ENCODE measurements at regions of chr1 and their contacts with region 1.

Region 1: GRCh38 chr1:184982002-184982954 is 8.0 kb upstream of the NIBAN1 start:
- DNase-seq: peak; percentile 76
- H3K4me3 ChIP-seq: no peak overlapping the region
- H3K27ac ChIP-seq: no peak overlapping the region
- H3K4me1 ChIP-seq: no peaks in the 10 kb centered on the region
- H3K27me3 ChIP-seq: no peaks in the 10 kb centered on the region
- CTCF ChIP-seq: peak; percentile 65 to 84 (median 73)
- POLR2A ChIP-seq: no peak

Region 2: GRCh38 chr1:184805667-184806295 is 176.5 kb before region 1 on chr1:
- intact Hi-C with region 1: loop called (anchors 5 kb)
- DNase-seq: peak; percentile 95
- H3K4me3 ChIP-seq: no peak overlapping the region
- H3K27ac ChIP-seq: no peak overlapping the region
- H3K4me1 ChIP-seq: no peaks in the 10 kb centered on the region
- H3K27me3 ChIP-seq: no peaks in the 10 kb centered on the region
- CTCF ChIP-seq: peak; percentile 84 to 91 (median 87)
- POLR2A ChIP-seq: no peak

Region 3: GRCh38 chr1:185033686-185034085 is 51.4 kb after region 1 on chr1:
- intact Hi-C with region 1: no loop called
- DNase-seq: no peak
- H3K4me3 ChIP-seq: no peak overlapping the region
- H3K27ac ChIP-seq: no peak overlapping the region
- H3K4me1 ChIP-seq: no peaks in the 10 kb centered on the region
- H3K27me3 ChIP-seq: no peaks in the 10 kb centered on the region
- CTCF ChIP-seq: no peak
- POLR2A ChIP-seq: no peak